SK-N-SH (cell line): ENCODE measurements at regions of chr7 and their contacts with region 1.

Region 1: GRCh38 chr7:154927624-154928143 is 75.2 kb downstream of the PAXIP1 start:
- DNase-seq: peak; percentile 68
- H3K4me3 ChIP-seq: peak overlapping the region; percentile 61 to 70
- H3K27ac ChIP-seq: peak overlapping the region in 1 of 2 experiments; percentile 44; a peak in 1 of 4 replicates
- H3K4me1 ChIP-seq: peaks cover 0 to 5% of the 10 kb centered on the region in 2 experiments; a peak in 1 of 4 replicates
- H3K27me3 ChIP-seq: no peaks in the 10 kb centered on the region
- CTCF ChIP-seq: peak; percentile 97
- EP300 ChIP-seq: no peak
- RAD21 ChIP-seq: peak; percentile 96

Region 2: GRCh38 chr7:154640266-154640865 is 287.3 kb before region 1 on chr7:
- CTCF ChIA-PET with region 1: no interaction called
- POLR2A ChIA-PET with region 1: no interaction called
- DNase-seq: peak; percentile 69
- H3K4me3 ChIP-seq: no peak overlapping the region
- H3K27ac ChIP-seq: no peak overlapping the region
- H3K4me1 ChIP-seq: no peaks in the 10 kb centered on the region
- H3K27me3 ChIP-seq: no peaks in the 10 kb centered on the region
- CTCF ChIP-seq: no peak
- EP300 ChIP-seq: no peak
- RAD21 ChIP-seq: peak; percentile 83

Region 3: GRCh38 chr7:154832557-154833138 is 95.0 kb before region 1 on chr7:
- CTCF ChIA-PET with region 1: interaction called, 26 read pairs
- POLR2A ChIA-PET with region 1: no interaction called
- DNase-seq: peak; percentile 81
- H3K4me3 ChIP-seq: no peak overlapping the region
- H3K27ac ChIP-seq: no peak overlapping the region
- H3K4me1 ChIP-seq: no peaks in the 10 kb centered on the region
- H3K27me3 ChIP-seq: no peaks in the 10 kb centered on the region
- CTCF ChIP-seq: no peak
- EP300 ChIP-seq: no peak
- RAD21 ChIP-seq: peak; percentile 95

Region 4: DNA sequence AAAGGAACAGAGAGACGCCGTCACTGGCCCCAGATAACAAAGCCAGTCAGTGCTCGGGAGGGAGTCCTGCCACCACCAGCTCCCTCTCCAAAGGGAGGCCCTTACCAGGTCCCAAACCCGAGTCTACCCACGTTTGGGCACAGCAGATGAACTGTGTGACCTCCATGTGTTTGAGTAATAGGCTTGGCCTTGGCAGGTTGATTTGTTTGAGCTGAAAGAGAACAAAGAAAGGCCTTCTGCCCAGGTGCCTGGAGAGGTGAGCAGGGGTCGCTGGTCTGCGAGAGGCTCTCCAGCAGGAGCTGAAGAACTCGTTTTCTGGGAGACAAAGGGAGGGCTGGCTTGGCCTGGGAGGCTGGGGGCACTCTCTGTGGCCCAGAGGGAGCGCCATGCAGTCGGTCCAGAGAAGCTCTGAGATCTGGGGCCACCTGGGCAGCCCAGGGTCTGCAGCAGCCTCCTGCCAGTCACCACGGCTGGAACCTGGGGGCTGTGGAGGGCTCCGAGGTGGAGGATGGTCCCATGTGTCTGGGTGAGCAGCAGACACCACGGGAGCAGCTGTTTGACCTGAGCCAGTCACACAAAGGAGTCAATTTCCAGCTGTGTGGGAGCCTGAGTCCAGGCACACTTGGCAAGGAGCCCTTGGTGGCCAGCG is 24.5 kb before region 1 on chr7:
- CTCF ChIA-PET with region 1: interaction called, 17 read pairs
- POLR2A ChIA-PET with region 1: no interaction called
- DNase-seq: peak; percentile 16
- H3K4me3 ChIP-seq: no peak overlapping the region
- H3K27ac ChIP-seq: no peak overlapping the region
- H3K4me1 ChIP-seq: no peaks in the 10 kb centered on the region
- H3K27me3 ChIP-seq: no peaks in the 10 kb centered on the region
- CTCF ChIP-seq: no peak
- EP300 ChIP-seq: no peak
- RAD21 ChIP-seq: no peak

Region 5: GRCh38 chr7:154968336-154969001 is 40.8 kb after region 1 on chr7:
- CTCF ChIA-PET with region 1: interaction called, 18 read pairs
- POLR2A ChIA-PET with region 1: no interaction called
- DNase-seq: peak; percentile 32
- H3K4me3 ChIP-seq: no peak overlapping the region
- H3K27ac ChIP-seq: no peak overlapping the region
- H3K4me1 ChIP-seq: peaks cover 0 to 7% of the 10 kb centered on the region in 2 experiments; a peak in 1 of 4 replicates
- H3K27me3 ChIP-seq: no peaks in the 10 kb centered on the region
- CTCF ChIP-seq: no peak
- EP300 ChIP-seq: no peak
- RAD21 ChIP-seq: no peak

Region 6: DNA sequence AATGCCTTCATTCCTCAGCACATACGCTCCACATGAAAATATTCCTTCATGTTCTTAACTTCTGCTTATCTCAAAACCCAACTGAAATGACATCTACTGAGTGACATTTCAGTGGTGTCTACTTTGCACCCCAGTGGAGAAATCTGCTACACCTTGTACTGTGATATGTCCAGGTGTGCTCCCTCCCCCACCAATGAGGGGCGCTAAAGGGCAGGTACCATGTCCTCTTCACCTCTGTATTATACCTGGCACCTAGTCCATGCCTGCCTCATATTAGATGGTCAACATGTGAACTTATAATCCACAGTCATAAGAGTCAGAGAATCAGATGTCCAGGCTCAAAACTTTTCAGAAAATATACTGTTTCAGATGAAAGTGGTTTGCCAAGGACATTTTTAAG is 73.1 kb after region 1 on chr7:
- CTCF ChIA-PET with region 1: interaction called, 16 read pairs
- POLR2A ChIA-PET with region 1: no interaction called
- DNase-seq: no peak
- H3K4me3 ChIP-seq: no peak overlapping the region
- H3K27ac ChIP-seq: no peak overlapping the region
- H3K4me1 ChIP-seq: peaks cover 0 to 5% of the 10 kb centered on the region in 2 experiments; a peak in 2 of 4 replicates
- H3K27me3 ChIP-seq: no peaks in the 10 kb centered on the region
- CTCF ChIP-seq: peak; percentile 23; the same call in 1 of the 2 replicates
- EP300 ChIP-seq: no peak
- RAD21 ChIP-seq: no peak

Region 7: GRCh38 chr7:155053002-155053401 is 125.3 kb after region 1 on chr7:
- CTCF ChIA-PET with region 1: no interaction called
- POLR2A ChIA-PET with region 1: no interaction called
- DNase-seq: no peak
- H3K4me3 ChIP-seq: no peak overlapping the region
- H3K27ac ChIP-seq: no peak overlapping the region
- H3K4me1 ChIP-seq: no peaks in the 10 kb centered on the region
- H3K27me3 ChIP-seq: no peaks in the 10 kb centered on the region; the same call in 1 of the 2 replicates
- CTCF ChIP-seq: no peak
- EP300 ChIP-seq: no peak
- RAD21 ChIP-seq: no peak

Region 8: DNA sequence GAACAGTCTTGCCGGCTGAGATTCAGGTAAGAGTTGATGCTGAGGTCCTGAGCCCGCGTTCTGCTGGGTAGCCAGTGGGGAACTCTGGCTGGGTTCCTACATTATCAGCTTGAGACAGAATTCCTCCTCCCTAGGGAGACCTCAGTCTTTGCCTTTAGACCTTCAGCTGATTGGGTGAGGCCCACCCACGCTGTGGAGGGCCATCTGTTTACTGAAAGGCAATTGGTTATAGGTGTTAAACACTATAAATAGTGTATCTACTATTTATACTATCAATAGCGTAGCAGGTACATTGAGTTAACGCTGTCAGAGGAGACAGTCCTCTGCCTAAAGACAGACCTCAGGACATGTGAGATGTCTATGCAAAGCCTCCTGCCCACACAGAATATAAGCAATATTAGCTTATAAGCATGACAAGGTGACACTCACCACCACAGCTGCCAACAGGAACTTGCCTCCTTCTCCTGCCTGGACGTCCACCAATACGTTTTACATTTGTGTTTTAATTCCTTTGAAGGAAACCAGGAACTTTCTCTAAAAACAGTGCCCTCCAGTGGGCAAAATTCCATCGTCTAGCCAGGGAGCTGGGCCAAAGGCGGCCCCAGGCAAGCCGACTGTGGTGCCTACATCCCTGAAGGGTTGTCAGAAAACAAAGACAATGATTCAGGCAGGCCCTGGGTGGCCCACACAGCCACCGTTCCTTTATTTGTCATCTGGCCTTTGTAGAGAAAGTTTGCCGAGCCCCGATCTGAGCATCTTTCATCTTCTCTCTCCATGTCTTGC is 428.8 kb after region 1 on chr7:
- CTCF ChIA-PET with region 1: interaction called, 38 read pairs
- POLR2A ChIA-PET with region 1: no interaction called
- DNase-seq: peak; percentile 67
- H3K4me3 ChIP-seq: no peak overlapping the region; a peak in 1 of 4 replicates
- H3K27ac ChIP-seq: no peak overlapping the region
- H3K4me1 ChIP-seq: peaks cover 0 to 5% of the 10 kb centered on the region in 2 experiments; a peak in 1 of 4 replicates
- H3K27me3 ChIP-seq: peaks cover 49% of the 10 kb centered on the region
- CTCF ChIP-seq: peak; percentile 60
- EP300 ChIP-seq: no peak
- RAD21 ChIP-seq: peak; percentile 34; the same call in 1 of the 2 replicates

Region 9: DNA sequence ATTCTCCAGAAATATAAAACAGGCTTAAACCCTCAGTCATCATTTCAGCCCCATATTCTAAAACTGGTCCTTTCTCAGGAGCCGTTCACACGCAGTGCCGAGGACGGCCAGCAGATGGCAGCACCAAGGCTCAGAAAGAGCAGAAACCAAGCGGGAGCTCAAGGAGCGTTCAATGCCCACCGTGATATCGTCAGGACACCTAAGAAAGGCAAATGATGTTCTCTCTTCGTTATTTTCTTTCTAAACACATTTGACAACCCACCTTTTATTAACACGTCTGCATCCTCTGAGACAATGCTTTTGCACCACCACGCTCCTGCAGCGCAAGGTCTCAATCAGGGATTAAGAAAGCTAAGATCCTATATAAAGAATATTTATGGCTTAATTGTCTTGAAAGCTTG is 671.1 kb after region 1 on chr7:
- CTCF ChIA-PET with region 1: interaction called, 11 read pairs
- POLR2A ChIA-PET with region 1: no interaction called
- DNase-seq: peak; percentile 88
- H3K4me3 ChIP-seq: peak overlapping the region in 1 of 2 experiments; percentile 11; a peak in 1 of 4 replicates
- H3K27ac ChIP-seq: no peak overlapping the region
- H3K4me1 ChIP-seq: peaks cover 0 to 3% of the 10 kb centered on the region in 2 experiments; a peak in 1 of 4 replicates
- H3K27me3 ChIP-seq: peaks cover 27% of the 10 kb centered on the region; the same call in 1 of the 2 replicates
- CTCF ChIP-seq: peak; percentile 100
- EP300 ChIP-seq: no peak
- RAD21 ChIP-seq: peak; percentile 90